Left colon (tissue), 2 donors: ENCODE measurements at regions of chr1 and their contacts with region 1.

Region 1: GRCh38 chr1:54406339-54407153 is at the start of gene SSBP3:
- DNase-seq: peak; percentile 90 to 91
- ATAC-seq: peak; percentile 81
- total RNA-seq, gene SSBP3: 61.7 to 74.2 TPM

Region 2: DNA sequence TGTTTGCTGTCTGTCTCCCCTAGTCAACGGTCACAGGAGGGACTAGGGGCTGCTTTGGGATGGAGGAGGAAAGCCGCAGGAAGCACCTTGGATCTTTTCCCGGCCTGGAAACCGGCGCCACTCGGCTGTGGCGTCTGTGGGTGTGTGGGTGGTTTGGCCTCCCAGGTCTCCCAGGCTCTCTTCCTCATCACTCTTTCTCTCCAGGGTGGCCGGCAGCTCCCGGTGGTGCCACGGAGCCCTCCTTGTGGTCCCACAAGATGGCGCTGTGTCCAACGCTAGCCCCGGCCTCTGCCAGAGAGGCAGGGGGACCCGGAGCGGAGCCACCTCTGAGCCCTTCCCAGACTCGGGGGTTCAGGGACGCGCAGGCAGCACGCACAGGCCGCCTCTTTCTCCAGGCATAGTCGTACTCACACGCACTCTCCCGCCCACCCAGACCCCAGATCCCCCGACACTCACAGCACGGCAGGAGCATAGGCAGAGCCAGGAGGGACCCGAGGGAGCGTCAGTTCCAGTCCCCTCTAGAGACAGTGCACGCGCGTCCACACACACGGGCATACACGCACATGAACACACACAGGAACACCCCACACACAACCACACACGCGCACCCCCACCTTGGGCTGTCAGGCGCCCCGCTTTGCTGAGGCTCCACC is 284.9 kb before region 1 on chr1:
- intact Hi-C with region 1: loop called in 1 of 2 experiments (anchors 5 kb)
- DNase-seq: peak; percentile 76 to 86
- ATAC-seq: peak; percentile 82

Region 3: GRCh38 chr1:54273092-54273794 is 133.3 kb before region 1 on chr1:
- intact Hi-C with region 1: loop called in 1 of 2 experiments (anchors 5 kb)
- DNase-seq: peak in 1 of 2 donors; percentile 68
- ATAC-seq: no peak

Region 4: DNA sequence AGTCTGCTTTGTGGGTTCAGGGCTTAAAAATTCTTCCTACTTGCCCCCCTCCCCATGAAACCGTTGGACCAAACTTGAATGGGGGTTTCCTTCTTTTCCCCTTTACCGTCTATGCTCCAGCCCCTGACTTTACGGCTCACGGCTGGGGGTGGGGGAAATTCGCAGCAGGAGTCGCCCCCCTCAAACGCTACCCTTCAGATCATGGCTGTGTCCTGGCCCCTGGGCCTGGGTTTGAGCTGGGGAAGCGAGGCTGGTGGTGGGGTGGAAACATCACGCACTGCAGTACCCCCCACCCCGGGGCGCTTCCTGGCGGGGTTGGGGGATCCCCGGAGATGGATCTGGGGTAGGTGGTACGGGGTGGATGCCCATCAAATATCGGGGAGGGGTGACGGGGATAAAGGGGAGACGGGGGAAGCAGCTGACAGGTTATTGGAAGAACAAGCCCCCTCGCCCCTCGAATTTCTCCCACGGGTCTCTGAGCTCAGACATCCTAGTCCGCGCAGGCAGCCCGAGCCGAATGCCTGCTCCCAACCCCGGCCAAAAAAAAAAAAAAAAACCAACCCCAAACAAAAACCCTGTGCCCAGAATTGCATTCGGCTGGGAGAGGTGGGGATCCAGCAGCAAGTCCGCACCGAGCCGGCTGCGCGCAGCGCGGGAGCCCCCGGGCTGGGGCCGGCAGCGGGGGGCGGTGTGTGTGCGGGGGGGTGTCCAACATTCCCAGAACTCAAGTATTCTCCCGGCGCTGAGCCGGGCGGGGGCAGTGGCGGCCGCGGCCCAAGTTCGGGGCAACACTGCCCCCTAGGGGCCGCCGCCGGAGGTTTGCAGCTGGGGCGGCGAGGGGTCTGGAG is 82.5 kb after region 1 on chr1:
- intact Hi-C with region 1: loop called (anchors 2 to 5 kb)
- DNase-seq: peak; percentile 72 to 82
- ATAC-seq: peak; percentile 66

Region 5: GRCh38 chr1:54564312-54565112 is 158.0 kb after region 1 on chr1:
- intact Hi-C with region 1: no loop called
- DNase-seq: peak; percentile 93 to 97
- ATAC-seq: peak; percentile 91